Psoas muscle (tissue), 8 donors: ENCODE measurements at regions of chr3 and their contacts with region 1.

Region 1: GRCh38 chr3:138594150-138594934 is at the start of gene CEP70:
- DNase-seq: peak; percentile 93 to 96
- ATAC-seq: peak; percentile 97 to 98 (median 98)
- H3K4me3 ChIP-seq: peak within 1 kb of the TSS; percentile 86
- H3K27ac ChIP-seq: peak within 1 kb of the TSS; percentile 94
- H3K4me1 ChIP-seq: no peaks in the 10 kb centered on the region
- H3K27me3 ChIP-seq: no peaks in the 10 kb centered on the region
- CTCF ChIP-seq: peak; percentile 88
- total RNA-seq, gene CEP70: 21.4 to 30.4 (median 24.0) TPM

Region 2: DNA sequence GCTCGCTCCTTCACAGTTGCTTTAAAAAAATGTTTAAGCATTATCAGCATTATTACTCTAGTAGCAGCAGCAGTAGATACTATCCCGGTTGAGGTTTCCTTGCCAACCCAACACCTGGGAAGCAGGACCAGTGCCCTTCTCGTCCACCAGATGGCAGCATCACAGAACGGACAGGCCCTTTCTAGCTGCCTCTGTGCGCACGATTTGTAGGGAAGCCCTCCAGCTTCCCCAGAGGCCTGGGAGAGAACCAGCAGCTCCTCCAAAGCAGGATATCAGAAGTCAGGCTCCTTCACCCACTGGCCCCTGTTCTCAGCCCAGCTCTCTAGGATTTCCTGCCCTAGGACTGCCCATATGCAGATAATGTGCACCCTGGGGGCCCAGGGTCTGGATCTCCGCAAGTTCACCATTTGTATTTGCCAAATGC is 176.8 kb before region 1 on chr3:
- intact Hi-C with region 1: loop called in 1 of 2 experiments (anchors 2 kb)
- DNase-seq: peak; percentile 72 to 89
- ATAC-seq: peak; percentile 89 to 95 (median 91)
- H3K4me3 ChIP-seq: no peak overlapping the region
- H3K27ac ChIP-seq: no peak overlapping the region
- H3K4me1 ChIP-seq: peaks cover 6% of the 10 kb centered on the region
- H3K27me3 ChIP-seq: no peaks in the 10 kb centered on the region
- CTCF ChIP-seq: peak; percentile 88

Region 3: GRCh38 chr3:138468886-138469285 is 125.5 kb before region 1 on chr3:
- intact Hi-C with region 1: loop called in 1 of 2 experiments (anchors 1 kb)
- DNase-seq: peak in 1 of 2 donors; percentile 71
- ATAC-seq: peak; percentile 87 to 95 (median 94)
- H3K4me3 ChIP-seq: peak overlapping the region; percentile 54
- H3K27ac ChIP-seq: peak overlapping the region; percentile 94
- H3K4me1 ChIP-seq: peaks cover 29% of the 10 kb centered on the region
- H3K27me3 ChIP-seq: no peaks in the 10 kb centered on the region
- CTCF ChIP-seq: no peak

Region 4: DNA sequence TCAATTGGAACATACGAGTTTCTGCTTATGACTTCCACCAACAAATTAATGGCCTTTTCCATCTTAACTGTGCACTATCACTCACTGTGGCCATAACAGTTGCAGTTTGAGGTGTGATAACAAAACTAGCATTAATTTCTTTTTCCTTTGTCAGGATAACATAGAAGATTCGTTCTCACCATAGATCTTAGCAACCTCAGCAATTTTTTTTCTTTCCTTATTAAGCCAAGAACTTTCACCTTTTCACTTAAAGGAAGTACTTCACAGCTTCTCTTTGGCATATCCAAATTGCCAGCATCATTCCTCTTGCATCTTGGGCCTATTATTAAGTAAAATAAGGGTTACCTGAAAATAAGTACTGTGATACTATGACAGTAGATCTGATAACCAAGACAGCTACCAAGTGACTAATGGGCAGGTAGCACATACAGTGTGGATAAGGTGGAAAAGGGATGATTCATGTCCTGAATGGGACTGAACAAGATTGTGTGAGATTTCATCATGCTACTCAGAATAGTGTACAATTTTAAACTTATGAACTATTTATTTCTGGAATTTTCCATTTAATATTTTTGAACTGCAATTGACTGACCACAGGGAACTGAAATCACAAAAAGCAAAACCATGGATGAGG is 46.9 kb before region 1 on chr3:
- intact Hi-C with region 1: no loop called
- DNase-seq: no peak
- ATAC-seq: no peak
- H3K4me3 ChIP-seq: no peak overlapping the region
- H3K27ac ChIP-seq: no peak overlapping the region
- H3K4me1 ChIP-seq: peaks cover 5% of the 10 kb centered on the region
- H3K27me3 ChIP-seq: no peaks in the 10 kb centered on the region
- CTCF ChIP-seq: no peak

Region 5: GRCh38 chr3:138608322-138609135 is 14.2 kb after region 1 on chr3 and contains the start of gene FAIM:
- intact Hi-C with region 1: loop called in 1 of 2 experiments (anchors 2 kb)
- DNase-seq: peak; percentile 77 to 87
- ATAC-seq: peak; percentile 82 to 85 (median 83)
- H3K4me3 ChIP-seq: peak within 1 kb of the TSS; percentile 85
- H3K27ac ChIP-seq: peak within 1 kb of the TSS; percentile 92
- H3K4me1 ChIP-seq: peaks cover 14% of the 10 kb centered on the region
- H3K27me3 ChIP-seq: no peaks in the 10 kb centered on the region
- CTCF ChIP-seq: no peak
- total RNA-seq, gene FAIM: 2.1 to 3.1 (median 2.3) TPM

Region 6: GRCh38 chr3:138862924-138863775 is 268.8 kb after region 1 on chr3:
- intact Hi-C with region 1: no loop called
- DNase-seq: no peak
- ATAC-seq: peak; percentile 76 to 94 (median 84)
- H3K4me3 ChIP-seq: peak overlapping the region; percentile 5
- H3K27ac ChIP-seq: peak overlapping the region; percentile 68
- H3K4me1 ChIP-seq: peaks cover 12% of the 10 kb centered on the region
- H3K27me3 ChIP-seq: no peaks in the 10 kb centered on the region
- CTCF ChIP-seq: no peak

Region 7: DNA sequence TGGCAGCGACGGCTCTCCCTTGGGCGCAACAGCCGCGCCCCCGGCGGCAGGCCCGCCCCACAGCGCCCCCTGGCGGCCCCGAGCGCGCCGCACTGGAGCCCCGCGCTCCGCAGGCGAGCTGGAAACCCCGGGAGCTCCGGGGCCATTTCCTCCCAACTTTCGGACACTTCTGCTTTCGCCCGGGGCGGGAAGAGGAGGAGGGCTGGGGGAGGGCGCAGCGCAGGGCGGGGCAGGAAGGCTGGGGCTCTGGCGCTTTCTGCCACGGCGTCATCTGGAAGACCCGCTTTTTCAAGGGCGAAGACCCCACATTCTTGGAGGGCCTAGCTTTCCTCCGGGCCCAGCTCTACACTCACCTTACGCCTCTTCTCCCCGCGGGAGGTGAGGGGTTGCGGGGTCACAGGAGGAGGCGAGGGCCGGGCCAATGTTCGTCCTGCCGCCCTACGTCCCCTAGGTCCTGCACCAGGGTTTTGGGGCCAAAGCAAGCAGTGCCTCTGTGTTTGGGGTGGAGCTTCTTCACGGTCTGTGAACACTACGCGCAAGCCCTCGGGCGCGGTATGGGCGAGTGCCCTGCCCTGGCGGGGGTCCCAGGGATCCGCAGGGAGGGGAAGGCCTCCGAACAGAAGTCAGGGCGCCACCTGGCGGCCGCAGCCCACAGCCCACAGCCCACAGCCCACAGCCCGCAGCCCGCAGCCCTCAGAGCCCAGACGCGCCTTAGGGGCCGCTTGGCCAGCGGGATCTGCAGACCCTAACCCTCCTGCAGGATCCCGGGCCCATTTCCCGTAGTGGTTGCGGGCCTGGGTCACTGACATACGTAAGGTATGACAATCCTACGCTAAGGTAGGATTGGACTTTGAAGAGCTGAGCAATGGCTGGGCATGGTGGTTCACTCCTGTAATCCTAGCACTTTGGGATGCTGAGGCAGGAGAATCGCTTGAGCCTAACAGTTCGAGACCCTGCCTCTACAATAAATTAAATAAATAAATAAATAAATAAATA is 321.5 kb after region 1 on chr3:
- intact Hi-C with region 1: loop called (anchors 1 to 2 kb)
- DNase-seq: peak; percentile 95 to 98
- ATAC-seq: peak; percentile 96 to 98 (median 97)
- H3K4me3 ChIP-seq: peak overlapping the region; percentile 81
- H3K27ac ChIP-seq: peak overlapping the region; percentile 94
- H3K4me1 ChIP-seq: no peaks in the 10 kb centered on the region
- H3K27me3 ChIP-seq: no peaks in the 10 kb centered on the region
- CTCF ChIP-seq: peak; percentile 98

Region 8: GRCh38 chr3:138923531-138923994 is 329.2 kb after region 1 on chr3:
- intact Hi-C with region 1: loop called in 1 of 2 experiments (anchors 2 kb)
- DNase-seq: peak; percentile 77 to 85
- ATAC-seq: peak; percentile 79 to 93 (median 86)
- H3K4me3 ChIP-seq: no peak overlapping the region
- H3K27ac ChIP-seq: no peak overlapping the region
- H3K4me1 ChIP-seq: no peaks in the 10 kb centered on the region
- H3K27me3 ChIP-seq: no peaks in the 10 kb centered on the region
- CTCF ChIP-seq: peak; percentile 86